H1 (cell line): ENCODE measurements at regions of chr22 and their contacts with region 1.

Region 1: GRCh38 chr22:21972293-21972779 is 10.3 kb downstream of the TOP3B start:
- DNase-seq: peak in 1 of 2 experiments; percentile 91
- H3K4me3 ChIP-seq: no peak overlapping the region
- H3K27ac ChIP-seq: no peak overlapping the region
- H3K4me1 ChIP-seq: no peaks in the 10 kb centered on the region
- H3K27me3 ChIP-seq: peaks cover 0 to 3% (median 0%) of the 10 kb centered on the region in 4 experiments; a peak in 1 of 7 replicates
- CTCF ChIP-seq: peak; percentile 71 to 85 (median 83)
- EP300 ChIP-seq: no peak
- POLR2A ChIP-seq: no peak
- RAD21 ChIP-seq: peak; percentile 41 to 43; a peak in 3 of 4 replicates

Region 2: DNA sequence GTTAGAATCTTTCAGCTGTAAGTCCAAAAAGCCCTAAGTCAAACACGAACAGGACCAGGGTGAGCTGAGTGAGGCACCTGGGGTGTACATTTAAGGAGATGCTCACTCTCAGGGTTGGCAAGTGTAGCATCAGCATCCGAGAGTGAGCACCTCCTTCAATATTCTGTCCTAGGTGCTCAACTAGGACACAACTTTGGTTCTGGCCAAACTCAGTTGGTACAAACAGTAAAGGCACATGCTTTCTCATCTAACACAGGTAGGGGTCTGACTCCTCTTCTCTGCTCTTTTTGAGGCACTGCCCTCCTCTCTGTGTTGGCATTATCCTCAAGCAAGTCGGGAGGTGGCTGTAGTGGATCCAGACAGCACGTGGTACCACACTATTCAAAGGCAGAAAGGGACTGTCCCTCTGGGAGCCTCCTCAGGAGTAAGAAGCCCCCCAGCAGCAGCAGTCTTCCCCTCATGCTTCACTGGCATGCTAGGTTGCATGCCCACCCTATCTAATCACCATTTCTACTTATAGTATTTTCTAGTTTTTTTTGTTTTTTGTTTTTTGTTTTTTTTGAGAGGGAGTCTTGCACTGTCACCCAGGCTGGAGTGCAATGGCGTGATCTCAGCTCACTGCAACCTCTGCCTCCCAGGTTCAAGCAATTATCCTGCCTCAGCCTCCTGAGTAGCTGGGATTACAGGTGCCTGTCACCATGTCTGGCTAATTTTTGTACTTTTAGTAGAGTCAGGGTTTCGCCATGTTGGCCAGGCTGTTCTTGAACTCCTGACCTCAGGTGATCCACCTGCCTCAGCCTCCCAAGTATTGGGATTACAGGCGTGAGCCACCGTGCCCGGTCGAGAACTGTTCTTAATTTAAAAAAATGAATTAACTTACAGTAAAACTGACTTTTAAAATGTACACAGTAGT is 90.2 kb before region 1 on chr22:
- CTCF ChIA-PET with region 1: no interaction called
- POLR2A ChIA-PET with region 1: no interaction called
- DNase-seq: no peak
- H3K4me3 ChIP-seq: no peak overlapping the region
- H3K27ac ChIP-seq: no peak overlapping the region
- H3K4me1 ChIP-seq: no peaks in the 10 kb centered on the region
- H3K27me3 ChIP-seq: no peaks in the 10 kb centered on the region
- CTCF ChIP-seq: no peak
- EP300 ChIP-seq: no peak
- POLR2A ChIP-seq: no peak
- RAD21 ChIP-seq: no peak

Region 3: GRCh38 chr22:21961886-21962654 is 10.3 kb before region 1 on chr22:
- CTCF ChIA-PET with region 1: interaction called, 26 read pairs
- POLR2A ChIA-PET with region 1: interaction called, 37 read pairs
- DNase-seq: no peak
- H3K4me3 ChIP-seq: no peak overlapping the region
- H3K27ac ChIP-seq: no peak overlapping the region
- H3K4me1 ChIP-seq: no peaks in the 10 kb centered on the region
- H3K27me3 ChIP-seq: no peaks in the 10 kb centered on the region; a peak in 1 of 7 replicates
- CTCF ChIP-seq: no peak
- EP300 ChIP-seq: no peak
- POLR2A ChIP-seq: no peak
- RAD21 ChIP-seq: no peak

Region 4: GRCh38 chr22:21982338-21982965 is 10.1 kb after region 1 on chr22 and contains the start of gene TOP3B:
- CTCF ChIA-PET with region 1: interaction called, 47 read pairs
- POLR2A ChIA-PET with region 1: interaction called, 19 read pairs
- DNase-seq: peak in 1 of 2 experiments; percentile 88
- H3K4me3 ChIP-seq: peak within 1 kb of the TSS; percentile 83 to 98 (median 94)
- H3K27ac ChIP-seq: peak within 1 kb of the TSS; percentile 57; the same call in 1 of the 2 replicates
- H3K4me1 ChIP-seq: peaks cover 0 to 2% (median 0%) of the 10 kb centered on the region in 4 experiments; a peak in 2 of 7 replicates
- H3K27me3 ChIP-seq: peaks cover 3 to 17% (median 15%) of the 10 kb centered on the region in 4 experiments; a peak in 5 of 7 replicates
- CTCF ChIP-seq: no peak
- EP300 ChIP-seq: peak; percentile 18 to 69; a peak in 2 of 3 replicates
- POLR2A ChIP-seq: peak in 1 of 2 experiments; percentile 93; a peak in 2 of 3 replicates
- RAD21 ChIP-seq: no peak
- total RNA-seq, gene TOP3B: 49.3 and 52.8 TPM in 2 replicates

Region 5: GRCh38 chr22:21990445-21991303 is 18.3 kb after region 1 on chr22:
- CTCF ChIA-PET with region 1: interaction called, 36 read pairs
- POLR2A ChIA-PET with region 1: no interaction called
- DNase-seq: no peak
- H3K4me3 ChIP-seq: no peak overlapping the region
- H3K27ac ChIP-seq: no peak overlapping the region
- H3K4me1 ChIP-seq: no peaks in the 10 kb centered on the region
- H3K27me3 ChIP-seq: peaks cover 58 to 91% (median 87%) of the 10 kb centered on the region in 4 experiments
- CTCF ChIP-seq: peak; percentile 9 to 20 (median 12); a peak in 3 of 4 replicates
- EP300 ChIP-seq: no peak
- POLR2A ChIP-seq: no peak
- RAD21 ChIP-seq: peak in 1 of 2 experiments; percentile 14; a peak in 2 of 4 replicates